MCF 10A (cell line): ENCODE measurements at regions of chr4 and their contacts with region 1.

Region 1: GRCh38 chr4:77433418-77433733 is 172.2 kb upstream of the CXCL13 start:
- DNase-seq: peak; percentile 72
- H3K4me3 Mint-ChIP-seq: no peak overlapping the region
- H3K27ac Mint-ChIP-seq: no peak overlapping the region
- H3K4me1 Mint-ChIP-seq: no peaks in the 10 kb centered on the region
- H3K27me3 Mint-ChIP-seq: no peaks in the 10 kb centered on the region
- CTCF ChIP-seq: peak; percentile 64

Region 2: DNA sequence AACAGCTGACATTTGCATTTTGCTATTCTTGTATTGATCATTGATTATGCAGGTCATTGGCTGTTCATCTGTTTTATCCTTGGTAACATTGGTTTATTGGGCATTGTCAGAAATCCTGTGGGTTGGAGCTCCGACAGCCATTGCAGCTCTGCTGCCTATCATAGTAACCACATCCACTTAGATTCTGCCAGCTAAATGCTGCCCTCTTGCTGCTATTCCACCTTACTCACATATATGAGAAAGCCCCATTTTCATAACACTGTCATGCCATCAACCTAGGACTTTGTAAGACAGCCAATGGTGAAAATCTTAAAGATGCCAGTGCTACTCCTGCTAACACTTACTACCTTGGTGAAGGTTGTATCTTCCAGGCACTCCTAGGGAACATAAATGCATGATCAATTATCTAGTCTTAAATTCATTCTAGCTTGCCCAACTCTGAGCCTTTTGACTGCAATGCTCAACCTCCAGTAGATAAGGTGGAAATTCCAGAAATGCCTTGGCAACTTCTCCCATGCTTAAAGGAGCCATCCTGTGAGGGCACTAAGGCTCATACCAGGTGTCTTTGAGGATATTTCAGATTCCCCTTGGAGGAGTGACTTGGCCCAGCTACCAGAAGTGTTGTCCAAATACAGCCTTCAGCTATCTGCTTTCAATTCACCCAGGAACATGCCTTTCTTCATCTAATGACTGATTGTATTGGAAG is 14.9 kb before region 1 on chr4:
- CTCF ChIA-PET with region 1: interaction called, 13 read pairs
- POLR2A ChIA-PET with region 1: no interaction called
- intact Hi-C with region 1: no loop called
- DNase-seq: peak; percentile 34
- H3K4me3 Mint-ChIP-seq: no peak overlapping the region
- H3K27ac Mint-ChIP-seq: no peak overlapping the region
- H3K4me1 Mint-ChIP-seq: no peaks in the 10 kb centered on the region
- H3K27me3 Mint-ChIP-seq: peaks cover 28% of the 10 kb centered on the region
- CTCF ChIP-seq: peak; percentile 19